ENCODE measurements at regions of chr13 and their contacts with region 1.

Region 1: GRCh38 chr13:28707629-28708427 is 10.9 kb downstream of the SLC46A3 start:
- H3K4me3 Mint-ChIP-seq: peak overlapping the region; percentile 26
- H3K27ac Mint-ChIP-seq: peak overlapping the region; percentile 86
- H3K4me1 Mint-ChIP-seq: peaks cover 70% of the 10 kb centered on the region
- H3K27me3 Mint-ChIP-seq: no peaks in the 10 kb centered on the region

Region 2: DNA sequence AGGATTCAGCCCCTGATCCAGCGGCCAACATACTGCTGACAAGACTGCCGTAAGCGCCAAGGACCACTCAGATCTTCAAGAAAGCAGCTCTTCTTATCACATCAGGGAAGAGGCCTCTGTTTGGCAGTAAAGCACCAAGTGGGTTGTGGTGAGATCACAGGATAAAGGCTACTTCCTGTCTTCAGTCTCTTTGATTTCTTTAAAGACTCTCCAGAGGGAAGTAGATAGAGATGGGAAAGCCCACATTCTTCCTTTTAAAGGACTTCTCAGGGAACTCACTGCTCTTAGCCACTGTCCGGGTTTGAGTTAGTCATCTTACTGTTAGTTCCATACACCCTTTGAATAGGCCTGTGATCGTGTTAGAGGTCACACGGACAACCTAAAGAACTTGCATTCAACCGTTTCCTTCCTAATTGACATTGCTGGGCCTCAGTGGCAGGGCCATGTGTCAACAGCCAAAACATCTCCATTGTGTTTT is 96.1 kb before region 1 on chr13:
- intact Hi-C with region 1: no loop called
- H3K4me3 Mint-ChIP-seq: no peak overlapping the region
- H3K27ac Mint-ChIP-seq: peak overlapping the region; percentile 82
- H3K4me1 Mint-ChIP-seq: peaks cover 50% of the 10 kb centered on the region
- H3K27me3 Mint-ChIP-seq: no peaks in the 10 kb centered on the region

Region 3: GRCh38 chr13:28744091-28744536 is 36.3 kb after region 1 on chr13:
- intact Hi-C with region 1: loop called (anchors 5 kb)
- H3K4me3 Mint-ChIP-seq: peak overlapping the region; percentile 34
- H3K27ac Mint-ChIP-seq: peak overlapping the region; percentile 94
- H3K4me1 Mint-ChIP-seq: peaks cover 52% of the 10 kb centered on the region
- H3K27me3 Mint-ChIP-seq: no peaks in the 10 kb centered on the region